ENCODE measurements at regions of chr17 and their contacts with region 1.

Region 1: GRCh38 chr17:39209317-39210092 is 9.4 kb downstream of the RPL19 start:
- DNase-seq: peak; percentile 79
- ATAC-seq: peak; percentile 71
- H3K4me3 Mint-ChIP-seq: peak overlapping the region; percentile 52
- H3K27ac Mint-ChIP-seq: peak overlapping the region; percentile 63
- H3K4me1 Mint-ChIP-seq: peaks cover 10% of the 10 kb centered on the region
- H3K27me3 Mint-ChIP-seq: peaks cover 3% of the 10 kb centered on the region

Region 2: GRCh38 chr17:39231591-39232551 is 22.4 kb after region 1 on chr17:
- POLR2A ChIA-PET with region 1: interaction called, 14 read pairs
- DNase-seq: peak; percentile 73
- ATAC-seq: peak; percentile 73
- H3K4me3 Mint-ChIP-seq: peak overlapping the region; percentile 47
- H3K27ac Mint-ChIP-seq: peak overlapping the region; percentile 36
- H3K4me1 Mint-ChIP-seq: peaks cover 11% of the 10 kb centered on the region
- H3K27me3 Mint-ChIP-seq: peaks cover 18% of the 10 kb centered on the region

Region 3: DNA sequence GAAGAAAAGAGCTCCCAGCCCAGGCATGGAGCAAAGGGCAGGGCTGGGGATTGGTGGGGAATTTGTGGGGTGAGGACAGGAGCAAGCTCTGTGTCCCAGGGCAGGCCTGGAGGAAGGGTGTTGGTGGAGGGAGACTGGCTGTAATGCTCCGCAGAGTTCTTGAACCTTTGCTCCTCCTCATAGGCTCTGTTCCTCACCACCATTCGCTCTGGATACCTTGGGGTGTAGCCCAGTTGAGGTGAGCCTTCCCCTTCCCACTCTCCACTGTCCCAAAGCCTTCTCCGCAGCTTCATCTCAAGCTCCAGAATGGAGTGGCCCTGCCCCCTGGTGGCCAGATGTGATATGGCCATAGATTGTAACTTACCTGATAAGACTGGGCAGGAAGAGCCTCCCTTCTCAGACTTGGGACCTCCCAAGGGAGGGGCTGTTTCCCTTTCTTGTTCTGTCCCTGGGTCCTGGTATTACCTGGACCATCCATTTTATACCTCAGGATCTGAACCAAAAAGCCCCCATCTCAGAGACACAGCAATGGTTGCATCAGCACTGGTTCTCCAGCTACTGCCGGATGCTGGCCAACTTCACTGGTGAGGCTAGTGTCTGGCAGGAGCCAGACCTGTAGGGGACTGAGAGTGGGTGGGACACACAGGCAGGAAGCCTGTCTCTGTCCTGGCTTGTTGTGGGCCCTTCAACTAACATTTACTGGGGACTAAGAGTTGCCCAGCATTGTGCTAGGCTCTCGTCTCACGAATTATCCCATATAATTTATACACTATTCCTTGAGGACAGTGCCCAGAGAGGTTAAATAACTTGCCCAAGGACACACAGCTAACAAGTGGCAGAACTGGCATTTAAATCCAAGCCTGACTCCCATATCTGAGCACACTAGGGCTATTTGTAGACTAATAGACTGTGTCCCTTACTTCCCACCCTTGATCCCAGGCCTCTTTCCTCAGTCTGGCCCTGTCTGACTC is 35.4 kb after region 1 on chr17:
- POLR2A ChIA-PET with region 1: interaction called, 22 read pairs
- DNase-seq: peak; percentile 85
- ATAC-seq: peak; percentile 84
- H3K4me3 Mint-ChIP-seq: peak overlapping the region; percentile 41
- H3K27ac Mint-ChIP-seq: peak overlapping the region; percentile 71
- H3K4me1 Mint-ChIP-seq: peaks cover 11% of the 10 kb centered on the region
- H3K27me3 Mint-ChIP-seq: peaks cover 2% of the 10 kb centered on the region